ENCODE measurements at regions of chr7 and their contacts with region 1.

Region 1: DNA sequence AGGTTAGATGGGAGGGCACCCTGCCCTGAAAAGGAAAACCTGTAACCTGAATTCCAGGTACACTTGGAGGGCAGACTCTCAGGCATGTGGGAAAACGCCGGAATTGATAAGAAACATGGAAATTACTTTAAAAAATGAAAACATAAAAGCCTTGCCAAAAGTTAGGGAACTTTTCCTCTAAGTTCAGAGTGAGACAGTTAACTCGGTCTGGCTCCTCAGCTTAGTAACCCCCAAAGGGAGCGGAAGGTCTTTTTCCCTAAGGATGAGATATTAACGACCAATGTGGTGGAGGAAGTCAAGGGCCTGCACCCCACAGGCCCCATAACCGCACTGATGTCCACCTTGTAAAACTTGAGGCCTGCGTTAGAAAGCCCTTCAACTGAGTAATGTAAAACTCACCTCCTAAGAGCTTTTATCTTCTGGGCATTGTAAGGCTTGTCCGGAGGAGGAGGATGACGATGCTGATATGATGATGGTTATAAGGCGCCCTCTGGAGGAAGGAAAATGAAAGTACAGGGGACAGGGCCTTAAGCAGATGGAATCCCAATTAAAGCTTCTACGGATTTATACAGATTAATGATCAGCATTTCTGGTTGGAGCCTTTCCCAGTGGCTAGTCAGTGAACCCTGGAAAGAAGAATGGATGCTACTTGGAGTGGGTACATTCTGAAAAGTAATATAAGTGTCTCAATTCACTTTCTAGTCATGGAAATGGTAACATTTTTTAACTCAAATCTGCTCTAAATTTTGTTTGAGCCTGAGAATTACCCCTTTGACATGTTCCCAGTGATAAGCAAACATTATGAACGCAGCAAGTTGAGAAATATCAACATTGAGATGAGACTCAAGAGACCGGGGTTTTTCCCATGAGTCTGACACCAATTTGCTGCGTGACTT is 694 bp downstream of the COL1A2 start:
- DNase-seq: peak in 1 of 2 donors; percentile 38
- ATAC-seq: peak; percentile 92
- H3K4me3 ChIP-seq: peak overlapping the region; percentile 85 to 97
- H3K27ac ChIP-seq: peak overlapping the region; percentile 94 to 97
- H3K4me1 ChIP-seq: peaks cover 0 to 2% of the 10 kb centered on the region in 2 donors
- H3K27me3 ChIP-seq: no peaks in the 10 kb centered on the region

Region 2: GRCh38 chr7:94133460-94133859 is 261.9 kb before region 1 on chr7:
- intact Hi-C with region 1: no loop called
- DNase-seq: no peak
- ATAC-seq: no peak
- H3K4me3 ChIP-seq: no peak overlapping the region
- H3K27ac ChIP-seq: no peak overlapping the region
- H3K4me1 ChIP-seq: no peaks in the 10 kb centered on the region
- H3K27me3 ChIP-seq: no peaks in the 10 kb centered on the region

Region 3: GRCh38 chr7:94295850-94296249 is 99.5 kb before region 1 on chr7:
- intact Hi-C with region 1: loop called (anchors 1 kb)
- DNase-seq: no peak
- ATAC-seq: peak; percentile 85
- H3K4me3 ChIP-seq: peak overlapping the region in 1 of 2 donors; percentile 29
- H3K27ac ChIP-seq: peak overlapping the region; percentile 76 to 99
- H3K4me1 ChIP-seq: peaks cover 8 to 10% of the 10 kb centered on the region in 2 donors
- H3K27me3 ChIP-seq: no peaks in the 10 kb centered on the region

Region 4: DNA sequence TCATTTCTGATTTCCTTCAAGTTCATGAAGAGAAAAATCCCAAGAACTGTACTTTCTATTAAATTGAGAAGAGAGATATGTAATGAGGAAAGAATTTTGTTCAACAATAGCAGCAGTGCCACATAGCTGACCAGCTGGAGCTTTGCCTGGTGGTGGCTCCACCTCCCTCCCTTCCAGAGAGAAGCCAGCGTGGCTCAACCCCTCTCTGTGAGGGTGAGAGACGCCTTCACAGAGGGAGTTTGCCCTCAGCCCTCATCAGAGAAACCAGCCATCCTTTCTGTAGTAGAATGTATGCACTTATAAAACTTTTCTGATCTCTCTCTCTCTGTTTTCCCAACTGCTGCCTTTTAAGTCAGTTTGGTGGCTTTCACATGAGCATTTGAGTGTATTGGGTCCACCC is 21.2 kb before region 1 on chr7:
- intact Hi-C with region 1: loop called (anchors 1 to 2 kb)
- DNase-seq: peak; percentile 93 to 95
- ATAC-seq: peak; percentile 93
- H3K4me3 ChIP-seq: peak overlapping the region in 1 of 2 donors; percentile 54
- H3K27ac ChIP-seq: peak overlapping the region; percentile 28 to 97
- H3K4me1 ChIP-seq: peaks cover 0 to 15% of the 10 kb centered on the region in 2 donors
- H3K27me3 ChIP-seq: no peaks in the 10 kb centered on the region

Region 5: DNA sequence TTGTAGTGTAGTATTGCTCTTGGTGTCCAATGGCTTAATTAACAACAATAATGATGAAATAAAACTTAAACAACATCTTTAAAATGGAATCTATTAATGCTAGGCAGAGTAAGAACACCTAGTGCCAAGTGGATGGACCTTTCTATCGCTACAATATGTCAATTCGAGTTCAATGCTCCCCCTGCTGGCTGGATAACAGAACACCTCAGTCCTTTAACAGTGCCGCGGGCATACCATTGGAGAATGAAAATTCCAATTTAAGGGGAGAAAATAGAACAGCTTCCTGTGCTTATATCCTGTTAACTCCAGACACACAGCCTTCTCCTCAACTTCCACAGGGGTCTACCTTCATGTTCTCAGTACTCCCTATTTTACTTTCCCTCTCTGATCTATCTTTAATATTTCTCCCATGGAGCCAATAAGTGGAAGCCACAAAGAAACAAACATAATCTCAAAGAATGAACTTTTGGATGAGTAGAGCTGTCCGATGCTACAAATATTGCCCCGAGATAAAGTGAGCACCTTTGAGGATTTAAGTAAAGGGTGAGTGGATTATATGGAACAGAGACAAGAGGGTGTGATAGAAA is 40.7 kb after region 1 on chr7:
- intact Hi-C with region 1: loop called in 1 of 2 experiments (anchors 5 kb)
- DNase-seq: peak in 1 of 2 donors; percentile 68
- ATAC-seq: peak; percentile 84
- H3K4me3 ChIP-seq: no peak overlapping the region
- H3K27ac ChIP-seq: no peak overlapping the region
- H3K4me1 ChIP-seq: no peaks in the 10 kb centered on the region
- H3K27me3 ChIP-seq: no peaks in the 10 kb centered on the region

Region 6: DNA sequence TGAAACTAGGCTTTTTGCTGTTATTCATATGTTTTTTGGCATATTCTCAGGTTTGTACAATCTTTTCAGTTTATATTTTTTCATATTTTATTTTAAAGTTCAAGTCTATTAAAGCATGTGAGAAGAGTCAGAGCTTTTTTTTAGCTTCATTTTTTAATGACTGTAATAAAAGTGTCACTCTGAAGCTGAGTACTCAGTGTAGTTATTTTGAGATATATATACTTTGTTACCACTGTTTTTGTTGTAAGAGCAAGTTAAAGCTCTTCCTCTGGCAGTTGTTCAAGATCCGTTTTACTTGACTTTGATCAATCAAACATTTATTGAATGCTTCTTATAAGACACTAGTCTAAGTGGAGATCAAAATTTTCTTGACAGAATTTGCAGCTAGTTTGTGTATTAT is 151.7 kb after region 1 on chr7:
- intact Hi-C with region 1: no loop called
- DNase-seq: no peak
- ATAC-seq: no peak
- H3K4me3 ChIP-seq: no peak overlapping the region
- H3K27ac ChIP-seq: no peak overlapping the region
- H3K4me1 ChIP-seq: no peaks in the 10 kb centered on the region
- H3K27me3 ChIP-seq: no peaks in the 10 kb centered on the region